K562 (cell line): ENCODE measurements at regions of chr6 and their contacts with region 1.

Region 1: GRCh38 chr6:17820055-17820454 is 113.3 kb upstream of the NUP153 start:
- DNase-seq: peak; percentile 56 to 92 (median 74)
- ATAC-seq: peak; percentile 97
- H3K4me3 ChIP-seq: no peak overlapping the region
- H3K27ac ChIP-seq: peak overlapping the region; percentile 67
- H3K4me1 ChIP-seq: peaks cover 11 to 13% of the 10 kb centered on the region in 2 experiments; a peak in 4 of 5 replicates
- H3K27me3 ChIP-seq: no peaks in the 10 kb centered on the region
- CTCF ChIP-seq: peak; percentile 29 to 38 (median 35); a peak in 3 of 6 replicates
- EP300 ChIP-seq: peak; percentile 61; the same call in 1 of the 2 replicates
- POLR2A ChIP-seq: no peak; the same call in 1 of the 2 replicates
- RAD21 ChIP-seq: peak; percentile 25 to 56

Region 2: GRCh38 chr6:17700421-17701416 is 119.3 kb before region 1 on chr6:
- CTCF ChIA-PET with region 1: no interaction called
- POLR2A ChIA-PET with region 1: interaction called, 3 read pairs
- in situ Hi-C with region 1: no loop called
- intact Hi-C with region 1: loop called (anchors 5 kb)
- DNase-seq: peak in 1 of 4 experiments; percentile 62
- ATAC-seq: no peak
- H3K4me3 ChIP-seq: no peak overlapping the region
- H3K27ac ChIP-seq: peak overlapping the region; percentile 37; the same call in 2 of the 3 replicates
- H3K4me1 ChIP-seq: peaks cover 20 to 22% of the 10 kb centered on the region in 2 experiments
- H3K27me3 ChIP-seq: no peaks in the 10 kb centered on the region
- CTCF ChIP-seq: no peak
- EP300 ChIP-seq: peak; percentile 51; the same call in 1 of the 2 replicates
- POLR2A ChIP-seq: no peak
- RAD21 ChIP-seq: no peak

Region 3: DNA sequence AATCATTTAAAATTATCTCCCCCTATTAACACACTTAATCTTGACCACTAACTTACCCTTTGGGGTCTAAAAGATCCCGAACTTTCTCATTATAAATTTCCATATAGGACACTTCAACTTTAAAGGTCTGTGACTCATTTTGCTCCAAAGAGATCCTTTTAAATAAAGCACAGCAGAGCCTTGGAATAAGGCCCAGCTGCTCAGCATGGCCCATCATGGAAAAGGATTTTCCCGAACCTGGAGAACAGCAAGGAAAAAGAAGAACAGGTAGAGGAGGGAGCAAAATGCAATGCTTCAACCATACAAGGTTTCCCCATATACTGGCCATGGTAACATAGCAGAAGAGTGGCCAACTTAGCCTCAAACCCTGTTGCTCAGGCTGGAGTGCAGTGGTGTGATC is 35.3 kb after region 1 on chr6:
- CTCF ChIA-PET with region 1: no interaction called
- POLR2A ChIA-PET with region 1: no interaction called
- in situ Hi-C with region 1: no loop called
- intact Hi-C with region 1: no loop called
- DNase-seq: no peak
- ATAC-seq: no peak
- H3K4me3 ChIP-seq: no peak overlapping the region
- H3K27ac ChIP-seq: no peak overlapping the region
- H3K4me1 ChIP-seq: peaks cover 4 to 8% of the 10 kb centered on the region in 2 experiments; a peak in 3 of 5 replicates
- H3K27me3 ChIP-seq: no peaks in the 10 kb centered on the region
- CTCF ChIP-seq: no peak
- EP300 ChIP-seq: no peak
- POLR2A ChIP-seq: no peak
- RAD21 ChIP-seq: no peak

Region 4: GRCh38 chr6:17907406-17908229 is 87.6 kb after region 1 on chr6:
- CTCF ChIA-PET with region 1: no interaction called
- POLR2A ChIA-PET with region 1: no interaction called
- in situ Hi-C with region 1: no loop called
- intact Hi-C with region 1: loop called (anchors 2 kb)
- DNase-seq: peak; percentile 69 to 95 (median 80)
- ATAC-seq: peak; percentile 96
- H3K4me3 ChIP-seq: no peak overlapping the region
- H3K27ac ChIP-seq: peak overlapping the region; percentile 93
- H3K4me1 ChIP-seq: peaks cover 8 to 28% of the 10 kb centered on the region in 2 experiments; a peak in 4 of 5 replicates
- H3K27me3 ChIP-seq: no peaks in the 10 kb centered on the region
- CTCF ChIP-seq: peak; percentile 43 to 63 (median 55)
- EP300 ChIP-seq: peak; percentile 94
- POLR2A ChIP-seq: peak; percentile 60
- RAD21 ChIP-seq: peak; percentile 75 to 77

Region 5: GRCh38 chr6:17971128-17972073 is 151.3 kb after region 1 on chr6:
- CTCF ChIA-PET with region 1: no interaction called
- POLR2A ChIA-PET with region 1: no interaction called
- in situ Hi-C with region 1: no loop called
- intact Hi-C with region 1: loop called (anchors 2 kb)
- DNase-seq: peak in 1 of 4 experiments; percentile 91
- ATAC-seq: peak; percentile 73
- H3K4me3 ChIP-seq: no peak overlapping the region; the same call in 1 of the 2 replicates
- H3K27ac ChIP-seq: peak overlapping the region; percentile 79
- H3K4me1 ChIP-seq: peaks cover 21 to 57% of the 10 kb centered on the region in 2 experiments
- H3K27me3 ChIP-seq: no peaks in the 10 kb centered on the region
- CTCF ChIP-seq: no peak
- EP300 ChIP-seq: peak; percentile 62; the same call in 1 of the 2 replicates
- POLR2A ChIP-seq: no peak
- RAD21 ChIP-seq: 0 out of 4 replicates have a peak, but pooled peaks of 1 of the 2 experiments have one; percentile 15